Naive thymus-derived CD4-positive, alpha-beta T cell (primary cell): ENCODE measurements at regions of chr1 and their contacts with region 1.

Region 1: DNA sequence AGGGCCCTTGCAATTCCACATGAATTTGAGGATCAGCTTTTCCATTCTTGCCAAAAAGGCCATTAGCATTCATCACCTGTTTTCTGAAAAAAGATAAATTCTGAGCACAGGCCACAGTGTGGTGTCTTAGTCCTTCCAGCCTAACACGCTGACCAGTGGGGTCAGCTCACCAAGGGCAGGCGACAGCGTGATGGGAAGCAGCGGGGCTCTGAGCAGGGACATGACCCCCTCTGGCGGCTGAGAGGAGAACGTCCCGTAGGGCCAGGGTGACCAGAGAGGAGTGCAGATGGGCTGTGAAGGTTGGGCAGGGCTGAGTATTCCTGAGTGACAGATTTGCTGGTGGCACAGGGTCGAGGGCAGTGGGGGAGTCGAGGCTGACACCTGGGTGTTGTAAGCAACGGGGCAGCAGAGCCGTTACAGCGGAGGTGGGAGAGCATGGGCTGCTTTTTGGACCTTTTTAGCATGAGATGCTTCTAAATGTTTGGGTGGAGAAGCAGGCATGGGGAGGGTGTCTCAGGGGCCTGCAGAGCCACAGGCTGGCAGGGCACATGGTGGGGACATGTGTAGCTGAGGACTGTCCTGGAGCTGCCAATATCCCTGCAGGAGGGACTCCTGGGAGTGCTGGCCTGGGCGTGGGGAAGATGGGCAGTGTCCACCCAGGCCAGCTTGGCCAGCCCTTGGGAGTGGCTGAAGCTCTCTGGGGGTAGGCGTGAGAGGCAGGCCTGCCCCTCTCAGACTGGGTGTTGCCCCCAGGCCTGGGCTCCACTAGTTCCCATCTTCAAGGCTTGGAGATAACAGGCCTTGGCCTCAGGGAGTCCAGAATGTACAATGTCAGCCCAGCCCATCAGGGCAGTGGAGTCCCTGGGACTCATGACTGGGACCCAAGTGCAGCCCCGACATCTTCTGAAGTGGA is 8.6 kb upstream of the CALML6 start:
- DNase-seq: peak in 8 of 9 donors; percentile 49 to 77 (median 54)
- ATAC-seq: peak; percentile 40
- H3K4me3 ChIP-seq: no peak overlapping the region
- H3K4me3 Mint-ChIP-seq: peak overlapping the region; percentile 5 to 81 (median 58)
- H3K27ac ChIP-seq: no peak overlapping the region
- H3K27ac Mint-ChIP-seq: peak overlapping the region in 7 of 9 donors; percentile 2 to 72 (median 44)
- H3K4me1 ChIP-seq: peaks cover 5 to 10% of the 10 kb centered on the region in 2 donors
- H3K4me1 Mint-ChIP-seq: peaks cover 12 to 18% (median 15%) of the 10 kb centered on the region in 7 donors
- H3K27me3 ChIP-seq: no peaks in the 10 kb centered on the region
- H3K27me3 Mint-ChIP-seq: no peaks in the 10 kb centered on the region

Region 2: DNA sequence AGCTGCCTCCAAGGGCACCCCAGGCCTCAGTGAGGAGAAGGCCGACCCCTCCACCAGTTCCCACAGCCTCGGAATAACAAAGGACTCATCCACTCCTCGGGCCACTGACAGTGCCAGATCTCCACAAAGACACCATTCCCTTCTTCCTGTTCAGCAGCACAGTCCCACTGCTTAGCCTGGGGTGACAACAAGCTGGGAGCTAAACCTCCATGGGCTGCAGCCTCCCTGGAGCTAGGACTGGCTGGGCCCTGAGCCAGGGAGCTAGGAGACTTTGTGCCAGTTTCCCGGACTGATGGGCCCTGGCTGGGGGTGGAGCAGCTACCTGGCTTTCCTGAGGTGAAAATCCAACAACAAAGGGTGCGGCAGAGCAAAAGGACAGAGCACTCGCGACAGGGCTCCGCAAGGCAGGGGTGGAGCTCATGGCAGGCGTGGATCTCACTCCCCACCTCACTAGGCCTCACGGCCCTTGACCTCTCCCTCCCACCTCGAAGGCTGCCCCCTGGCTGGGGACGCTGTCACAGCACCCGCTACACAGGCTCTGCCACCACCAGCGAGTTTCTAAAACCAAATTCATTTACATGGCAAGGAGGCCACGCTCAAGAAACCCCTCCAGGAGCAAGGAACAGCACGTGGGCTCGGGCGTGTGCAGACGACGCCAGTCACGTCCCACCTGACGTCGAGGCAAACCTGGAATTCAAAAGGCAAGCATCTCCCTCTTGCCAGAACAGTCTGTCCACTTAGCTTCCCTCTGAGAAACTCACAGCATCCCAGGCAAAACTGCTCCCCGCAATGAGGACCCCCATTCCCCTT is 227.7 kb before region 1 on chr1:
- CTCF ChIA-PET with region 1: no interaction called
- POLR2A ChIA-PET with region 1: no interaction called
- intact Hi-C with region 1: loop called in 1 of 2 experiments (anchors 5 kb)
- DNase-seq: peak in 6 of 9 donors; percentile 29 to 56 (median 50)
- ATAC-seq: peak; percentile 56
- H3K4me3 ChIP-seq: peak overlapping the region; percentile 77
- H3K4me3 Mint-ChIP-seq: peak overlapping the region; percentile 82 to 97 (median 90)
- H3K27ac ChIP-seq: peak overlapping the region; percentile 88
- H3K27ac Mint-ChIP-seq: peak overlapping the region; percentile 91 to 100 (median 96)
- H3K4me1 ChIP-seq: peaks cover 9 to 10% of the 10 kb centered on the region in 2 donors
- H3K4me1 Mint-ChIP-seq: peaks cover 24 to 43% (median 30%) of the 10 kb centered on the region in 7 donors
- H3K27me3 ChIP-seq: no peaks in the 10 kb centered on the region
- H3K27me3 Mint-ChIP-seq: no peaks in the 10 kb centered on the region

Region 3: DNA sequence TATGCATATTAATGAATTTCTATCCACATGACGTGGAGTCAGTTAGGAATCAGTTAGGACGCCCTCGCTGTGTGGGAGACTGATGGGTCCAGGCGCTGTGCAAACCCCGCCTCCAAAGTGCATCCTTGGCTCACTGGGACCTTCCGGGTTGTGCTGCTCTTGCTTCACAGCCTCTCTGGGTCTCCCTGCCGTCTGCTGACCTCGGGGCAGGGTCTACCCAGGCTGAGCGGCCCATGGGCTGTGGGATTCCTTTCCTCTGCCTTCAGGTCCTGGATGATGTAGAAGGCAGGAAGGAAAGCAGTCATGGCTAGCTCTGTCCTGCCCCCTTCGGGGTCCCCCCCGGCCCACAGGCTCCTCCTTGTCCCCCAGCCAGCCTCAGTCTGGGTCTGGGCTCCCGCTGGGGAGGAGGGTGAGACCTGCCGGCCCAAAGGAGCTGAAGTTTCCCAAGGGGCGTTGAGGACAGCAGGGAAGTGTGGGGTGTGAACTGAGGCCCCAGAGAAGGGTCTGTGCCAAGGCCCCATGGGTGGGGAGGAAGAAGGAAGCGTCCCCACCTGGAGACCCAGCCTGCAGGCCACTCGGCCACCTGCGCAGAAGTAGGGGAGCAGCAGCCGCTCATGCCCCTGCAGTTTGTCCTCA is 157.6 kb before region 1 on chr1:
- CTCF ChIA-PET with region 1: no interaction called
- POLR2A ChIA-PET with region 1: no interaction called
- intact Hi-C with region 1: loop called in 1 of 2 experiments (anchors 5 kb)
- DNase-seq: no peak
- ATAC-seq: no peak
- H3K4me3 ChIP-seq: no peak overlapping the region
- H3K4me3 Mint-ChIP-seq: peak overlapping the region in 4 of 10 donors; percentile 37 to 68 (median 56)
- H3K27ac ChIP-seq: no peak overlapping the region
- H3K27ac Mint-ChIP-seq: peak overlapping the region in 4 of 9 donors; percentile 38 to 60 (median 48)
- H3K4me1 ChIP-seq: no peaks in the 10 kb centered on the region
- H3K4me1 Mint-ChIP-seq: peaks cover 0 to 10% (median 5%) of the 10 kb centered on the region in 7 donors
- H3K27me3 ChIP-seq: no peaks in the 10 kb centered on the region
- H3K27me3 Mint-ChIP-seq: no peaks in the 10 kb centered on the region

Region 4: DNA sequence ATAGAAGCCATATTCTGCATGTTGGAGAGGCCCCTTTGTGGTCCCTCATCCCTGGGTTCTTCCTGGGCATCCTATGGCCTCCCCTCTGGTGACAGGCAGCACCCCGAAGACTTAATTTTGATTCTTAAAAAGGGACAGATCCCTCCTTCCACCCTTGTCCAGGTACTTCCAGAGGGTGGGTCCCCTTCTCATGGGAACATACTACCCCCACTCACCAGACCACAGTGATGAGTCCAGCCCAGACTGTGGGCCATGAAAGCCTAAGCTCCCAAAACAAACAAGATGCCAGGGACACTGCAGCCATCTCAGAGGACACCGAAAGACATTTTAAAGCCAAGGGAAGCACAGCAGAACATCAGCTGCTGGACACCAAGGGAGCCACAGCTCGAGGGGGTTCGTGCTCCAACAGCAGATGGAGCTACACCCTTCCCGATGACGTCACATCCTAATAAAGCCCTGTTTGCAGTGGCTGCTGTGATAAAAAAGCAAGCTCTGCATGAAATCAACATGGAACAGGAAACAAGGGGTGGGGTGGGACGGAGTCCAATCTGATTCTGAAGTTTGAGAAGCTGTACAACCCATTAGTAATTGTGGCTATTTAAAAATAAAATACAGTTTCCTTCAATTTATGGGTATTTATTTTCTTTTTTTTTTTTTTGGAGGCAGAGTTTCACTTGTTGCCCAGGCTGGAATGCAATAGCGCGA is 47.9 kb before region 1 on chr1:
- CTCF ChIA-PET with region 1: interaction called, 5 read pairs
- POLR2A ChIA-PET with region 1: interaction called, 3 read pairs
- intact Hi-C with region 1: loop called in 1 of 2 experiments (anchors 2 kb)
- DNase-seq: peak in 7 of 9 donors; percentile 10 to 50 (median 39)
- ATAC-seq: peak; percentile 58
- H3K4me3 ChIP-seq: no peak overlapping the region
- H3K4me3 Mint-ChIP-seq: peak overlapping the region in 9 of 10 donors; percentile 16 to 68 (median 53)
- H3K27ac ChIP-seq: peak overlapping the region; percentile 57
- H3K27ac Mint-ChIP-seq: peak overlapping the region; percentile 18 to 90 (median 85)
- H3K4me1 ChIP-seq: peaks cover 37 to 40% of the 10 kb centered on the region in 2 donors
- H3K4me1 Mint-ChIP-seq: peaks cover 45 to 92% (median 72%) of the 10 kb centered on the region in 7 donors
- H3K27me3 ChIP-seq: no peaks in the 10 kb centered on the region
- H3K27me3 Mint-ChIP-seq: no peaks in the 10 kb centered on the region

Region 5: GRCh38 chr1:2044510-2045319 is 138.3 kb after region 1 on chr1:
- CTCF ChIA-PET with region 1: interaction called, 6 read pairs
- POLR2A ChIA-PET with region 1: no interaction called
- intact Hi-C with region 1: loop called in 1 of 2 experiments (anchors 10 kb)
- DNase-seq: peak; percentile 65 to 94 (median 78)
- ATAC-seq: peak; percentile 93
- H3K4me3 ChIP-seq: peak overlapping the region; percentile 35
- H3K4me3 Mint-ChIP-seq: peak overlapping the region in 8 of 10 donors; percentile 33 to 78 (median 52)
- H3K27ac ChIP-seq: no peak overlapping the region
- H3K27ac Mint-ChIP-seq: peak overlapping the region in 1 of 9 donors; percentile 3
- H3K4me1 ChIP-seq: peaks cover 7 to 14% of the 10 kb centered on the region in 2 donors
- H3K4me1 Mint-ChIP-seq: peaks cover 10 to 28% (median 22%) of the 10 kb centered on the region in 7 donors
- H3K27me3 ChIP-seq: no peaks in the 10 kb centered on the region
- H3K27me3 Mint-ChIP-seq: peaks cover 0 to 35% (median 5%) of the 10 kb centered on the region in 5 donors

Region 6: DNA sequence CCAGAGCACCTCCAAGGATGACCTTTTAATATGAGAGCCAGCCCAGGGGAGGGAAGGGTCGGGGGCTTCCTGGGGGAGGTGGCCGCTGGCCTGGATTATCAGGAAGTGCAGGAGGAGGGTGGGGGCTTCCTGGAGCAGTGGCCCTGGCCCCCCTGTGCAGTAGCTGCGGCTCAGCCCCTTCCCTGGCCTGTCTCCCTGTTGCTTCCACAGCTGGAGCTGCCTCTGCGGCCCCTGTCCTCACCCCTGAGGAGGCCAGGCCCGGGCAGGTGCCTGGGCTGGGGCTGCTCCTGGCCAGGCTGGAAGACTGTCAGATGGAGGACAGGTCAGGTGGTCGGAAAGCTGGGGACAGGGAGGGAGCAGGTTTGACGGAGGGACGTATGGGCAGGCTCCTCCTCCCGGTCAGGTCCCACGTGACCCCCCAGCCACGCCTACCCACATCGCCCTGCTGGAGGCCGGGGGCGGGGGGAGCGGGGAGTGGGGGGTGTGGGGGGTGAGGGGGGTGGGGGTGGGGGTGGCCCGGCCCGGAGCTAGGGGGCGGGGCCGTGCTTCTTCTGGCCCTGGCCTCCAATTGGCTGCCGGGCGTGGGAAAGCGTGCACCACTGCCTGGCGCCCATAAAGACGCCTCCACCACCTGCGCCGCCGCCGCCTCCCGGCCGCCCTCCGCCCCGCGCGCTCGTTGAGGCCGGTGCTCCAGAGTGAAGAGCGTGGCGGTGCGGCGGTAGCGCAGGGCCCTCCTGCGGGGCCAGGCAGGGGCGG is 639.5 kb after region 1 on chr1:
- CTCF ChIA-PET with region 1: no interaction called
- POLR2A ChIA-PET with region 1: no interaction called
- intact Hi-C with region 1: loop called in 1 of 2 experiments (anchors 1 kb)
- DNase-seq: peak; percentile 83 to 91 (median 86)
- ATAC-seq: peak; percentile 74
- H3K4me3 ChIP-seq: peak overlapping the region; percentile 88
- H3K4me3 Mint-ChIP-seq: peak overlapping the region; percentile 27 to 97 (median 94)
- H3K27ac ChIP-seq: peak overlapping the region; percentile 97
- H3K27ac Mint-ChIP-seq: peak overlapping the region in 8 of 9 donors; percentile 28 to 98 (median 97)
- H3K4me1 ChIP-seq: peaks cover 18 to 40% of the 10 kb centered on the region in 2 donors
- H3K4me1 Mint-ChIP-seq: peaks cover 0 to 41% (median 18%) of the 10 kb centered on the region in 7 donors
- H3K27me3 ChIP-seq: no peaks in the 10 kb centered on the region
- H3K27me3 Mint-ChIP-seq: peaks cover 0 to 16% (median 0%) of the 10 kb centered on the region in 5 donors